ENCODE measurements at regions of chr4 and their contacts with region 1.

Region 1: DNA sequence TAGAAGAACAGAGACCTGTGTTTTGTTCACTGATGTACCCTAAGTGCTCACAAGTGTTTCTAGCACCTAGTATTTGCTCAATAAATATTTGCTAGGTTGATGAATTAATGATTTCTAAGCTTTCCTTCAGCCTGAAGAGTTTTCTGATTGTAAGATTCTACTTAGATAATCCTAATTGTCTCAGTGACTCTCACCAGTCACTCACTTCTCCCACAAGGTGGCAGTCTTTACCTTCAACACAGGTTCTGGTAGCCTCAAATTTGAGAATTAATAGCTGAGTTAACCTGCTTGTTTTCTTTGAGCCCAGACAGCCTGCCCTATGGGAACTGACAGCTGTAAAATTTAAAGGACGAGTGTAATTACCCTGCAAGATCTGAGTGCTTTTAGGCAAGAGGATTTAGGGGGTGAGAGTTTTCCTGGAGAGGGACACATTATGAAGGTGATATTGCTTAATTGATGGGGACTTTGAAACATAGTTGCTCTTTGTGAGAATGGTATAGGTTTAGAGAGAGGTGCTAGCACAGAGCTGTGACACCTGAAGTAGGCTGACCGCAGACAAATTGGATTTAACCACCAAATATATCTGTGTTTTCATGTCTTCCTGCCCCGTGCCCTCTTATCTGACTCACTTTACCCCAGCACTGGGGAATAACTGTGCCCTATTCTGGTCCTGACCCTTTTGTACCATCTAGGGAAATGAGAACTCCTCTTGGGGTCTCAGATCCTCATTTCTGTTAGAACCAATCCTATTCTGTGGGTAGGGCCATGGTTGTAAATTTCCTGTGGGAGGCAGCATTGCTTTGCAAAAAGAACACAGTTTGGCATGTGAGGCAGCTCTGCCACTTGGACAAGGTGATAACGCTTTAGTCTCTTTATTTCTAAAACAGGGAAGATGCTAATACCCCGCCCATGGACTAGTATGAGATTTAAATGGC is 27.7 kb downstream of the CD38 start:
- DNase-seq: peak; percentile 84
- H3K4me3 ChIP-seq: no peak overlapping the region
- H3K27ac ChIP-seq: no peak overlapping the region
- H3K4me1 ChIP-seq: peaks cover 6% of the 10 kb centered on the region
- H3K27me3 ChIP-seq: no peaks in the 10 kb centered on the region
- CTCF ChIP-seq: peak; percentile 79

Region 2: DNA sequence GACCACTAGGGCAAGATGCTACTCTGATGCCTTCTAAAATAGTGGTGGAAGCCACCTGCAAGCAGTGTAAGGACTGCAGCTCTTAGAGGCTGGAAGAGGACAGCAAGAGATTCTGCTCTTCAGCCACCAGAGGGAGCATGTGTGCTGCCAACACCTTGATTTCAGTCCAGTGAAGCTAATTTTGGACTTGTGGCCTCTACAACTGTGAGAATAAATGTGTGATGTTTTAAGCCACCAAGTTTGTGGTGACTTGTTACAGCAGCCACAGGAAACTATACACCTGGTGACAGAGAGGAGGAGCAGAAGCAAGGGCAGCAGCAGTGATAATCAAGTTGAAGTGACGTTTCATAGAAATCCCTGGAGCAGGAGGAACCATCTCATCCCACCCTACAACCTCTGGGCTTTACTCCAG is 76.8 kb after region 1 on chr4:
- CTCF ChIA-PET with region 1: interaction called, 13 read pairs
- POLR2A ChIA-PET with region 1: no interaction called
- intact Hi-C with region 1: loop called (anchors 1 kb)
- DNase-seq: peak; percentile 81
- H3K4me3 ChIP-seq: no peak overlapping the region
- H3K27ac ChIP-seq: no peak overlapping the region
- H3K4me1 ChIP-seq: peaks cover 20% of the 10 kb centered on the region
- H3K27me3 ChIP-seq: no peaks in the 10 kb centered on the region
- CTCF ChIP-seq: peak; percentile 93

Region 3: GRCh38 chr4:15956179-15956850 is 150.5 kb after region 1 on chr4:
- CTCF ChIA-PET with region 1: interaction called, 89 read pairs
- POLR2A ChIA-PET with region 1: no interaction called
- intact Hi-C with region 1: loop called (anchors 1 kb)
- DNase-seq: peak; percentile 78
- H3K4me3 ChIP-seq: no peak overlapping the region
- H3K27ac ChIP-seq: no peak overlapping the region
- H3K4me1 ChIP-seq: no peaks in the 10 kb centered on the region
- H3K27me3 ChIP-seq: no peaks in the 10 kb centered on the region
- CTCF ChIP-seq: peak; percentile 92

Region 4: GRCh38 chr4:16001484-16001858 is 195.6 kb after region 1 on chr4:
- CTCF ChIA-PET with region 1: interaction called, 14 read pairs
- POLR2A ChIA-PET with region 1: no interaction called
- intact Hi-C with region 1: loop called (anchors 1 kb)
- DNase-seq: peak; percentile 82
- H3K4me3 ChIP-seq: no peak overlapping the region
- H3K27ac ChIP-seq: no peak overlapping the region
- H3K4me1 ChIP-seq: no peaks in the 10 kb centered on the region
- H3K27me3 ChIP-seq: no peaks in the 10 kb centered on the region
- CTCF ChIP-seq: peak; percentile 90

Region 5: GRCh38 chr4:16196478-16197393 is 390.9 kb after region 1 on chr4:
- CTCF ChIA-PET with region 1: interaction called, 3 read pairs
- POLR2A ChIA-PET with region 1: no interaction called
- intact Hi-C with region 1: loop called (anchors 10 kb)
- DNase-seq: peak; percentile 92
- H3K4me3 ChIP-seq: peak overlapping the region; percentile 24
- H3K27ac ChIP-seq: peak overlapping the region; percentile 47
- H3K4me1 ChIP-seq: peaks cover 60% of the 10 kb centered on the region
- H3K27me3 ChIP-seq: no peaks in the 10 kb centered on the region
- CTCF ChIP-seq: peak; percentile 66

Region 6: GRCh38 chr4:16264798-16265197 is 458.9 kb after region 1 on chr4:
- CTCF ChIA-PET with region 1: interaction called, 8 read pairs
- POLR2A ChIA-PET with region 1: no interaction called
- intact Hi-C with region 1: loop called (anchors 2 kb)
- DNase-seq: peak; percentile 67
- H3K4me3 ChIP-seq: no peak overlapping the region
- H3K27ac ChIP-seq: no peak overlapping the region
- H3K4me1 ChIP-seq: peaks cover 5% of the 10 kb centered on the region
- H3K27me3 ChIP-seq: no peaks in the 10 kb centered on the region
- CTCF ChIP-seq: peak; percentile 65

Measured in A673 (cell line).